ENCODE measurements at regions of chr6 and their contacts with region 1.

Region 1: GRCh38 chr6:87701676-87702588 is at the start of gene AKIRIN2:
- DNase-seq: peak; percentile 98
- H3K4me3 ChIP-seq: peak within 1 kb of the TSS; percentile 68 to 90 (median 85)
- H3K27ac ChIP-seq: peak within 1 kb of the TSS; percentile 94
- H3K4me1 ChIP-seq: peaks cover 15% of the 10 kb centered on the region
- H3K27me3 ChIP-seq: no peaks in the 10 kb centered on the region
- CTCF ChIP-seq: no peak
- total RNA-seq, gene AKIRIN2: 32.7 to 65.7 TPM

Region 2: DNA sequence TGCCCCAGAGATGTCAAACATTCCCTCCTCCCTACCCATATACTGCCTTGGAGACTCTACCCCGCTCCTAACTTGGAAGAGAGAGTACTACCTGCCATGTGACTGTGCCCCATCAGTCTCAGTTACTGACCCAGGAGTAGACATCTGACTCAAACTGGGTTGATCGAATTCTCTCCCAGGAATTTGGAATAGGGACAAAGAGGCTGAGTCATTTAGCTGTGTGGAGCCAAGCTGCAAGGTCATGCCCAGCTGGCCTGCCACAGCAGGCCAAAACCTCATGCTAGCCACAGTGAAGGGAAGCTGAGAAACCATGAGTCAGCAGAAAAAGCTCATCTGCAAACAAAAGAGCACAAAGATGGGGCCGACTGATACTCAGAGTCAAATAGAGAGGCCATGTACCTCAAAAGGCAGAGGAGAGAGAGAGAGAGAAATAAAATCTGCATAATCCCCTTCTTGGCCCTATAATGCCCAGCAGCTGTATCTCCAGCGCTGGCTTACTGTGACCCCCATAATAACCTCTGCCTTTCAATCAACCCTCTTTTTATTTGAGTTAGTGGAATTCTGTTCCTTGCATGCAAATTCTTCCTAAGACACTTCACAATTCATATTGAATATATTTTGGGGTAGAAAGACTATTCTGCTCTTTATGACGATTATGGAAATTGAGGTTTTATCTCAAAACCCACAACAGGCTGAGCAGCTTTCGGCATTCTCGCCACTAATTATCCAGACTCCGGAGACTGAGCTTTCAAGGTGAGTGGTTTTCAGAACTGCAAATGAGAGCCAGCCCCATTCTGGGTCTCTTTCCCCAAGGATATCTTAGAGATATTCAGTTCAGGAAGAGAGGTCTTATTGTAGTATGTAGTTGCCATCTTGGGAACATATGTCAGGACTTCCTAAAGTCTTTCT is 21.5 kb after region 1 on chr6:
- CTCF ChIA-PET with region 1: interaction called, 3 read pairs
- dilution Hi-C with region 1: no loop called
- in situ Hi-C with region 1: no loop called
- intact Hi-C with region 1: loop called (anchors 2 kb)
- DNase-seq: peak; percentile 98
- H3K4me3 ChIP-seq: no peak overlapping the region
- H3K27ac ChIP-seq: peak overlapping the region; percentile 88
- H3K4me1 ChIP-seq: peaks cover 33% of the 10 kb centered on the region
- H3K27me3 ChIP-seq: no peaks in the 10 kb centered on the region
- CTCF ChIP-seq: no peak

Region 3: DNA sequence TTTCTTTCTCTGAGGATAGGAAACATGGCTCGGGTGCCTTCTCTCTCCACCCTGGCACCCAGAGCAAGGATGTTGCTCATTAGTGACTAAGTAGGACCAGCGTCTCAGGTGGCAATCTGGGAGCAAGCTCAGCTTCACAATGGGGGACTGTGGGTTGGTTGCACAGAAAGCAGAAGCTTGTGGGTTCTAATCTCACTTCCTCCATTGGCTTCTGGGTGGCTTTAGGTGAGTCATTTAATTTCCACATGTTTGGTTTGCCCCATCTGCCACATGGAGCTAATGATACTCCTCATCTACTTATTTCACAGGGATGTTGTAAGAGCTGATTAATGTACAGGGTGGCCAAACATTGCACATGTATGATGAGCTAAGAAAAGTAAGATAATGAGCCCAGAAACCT is 54.9 kb after region 1 on chr6:
- CTCF ChIA-PET with region 1: no interaction called
- dilution Hi-C with region 1: loop called (anchors 5 kb)
- in situ Hi-C with region 1: no loop called
- intact Hi-C with region 1: loop called (anchors 1 kb)
- DNase-seq: peak; percentile 93
- H3K4me3 ChIP-seq: no peak overlapping the region
- H3K27ac ChIP-seq: peak overlapping the region; percentile 42
- H3K4me1 ChIP-seq: peaks cover 21% of the 10 kb centered on the region
- H3K27me3 ChIP-seq: no peaks in the 10 kb centered on the region
- CTCF ChIP-seq: no peak

Region 4: GRCh38 chr6:87789198-87789899 is 87.4 kb after region 1 on chr6:
- CTCF ChIA-PET with region 1: no interaction called
- dilution Hi-C with region 1: no loop called
- in situ Hi-C with region 1: no loop called
- intact Hi-C with region 1: loop called (anchors 1 kb)
- DNase-seq: peak; percentile 89
- H3K4me3 ChIP-seq: peak overlapping the region; percentile 18 to 28 (median 28)
- H3K27ac ChIP-seq: peak overlapping the region; percentile 98
- H3K4me1 ChIP-seq: peaks cover 18% of the 10 kb centered on the region
- H3K27me3 ChIP-seq: no peaks in the 10 kb centered on the region
- CTCF ChIP-seq: no peak

Region 5: GRCh38 chr6:87808005-87808757 is 106.2 kb after region 1 on chr6:
- CTCF ChIA-PET with region 1: no interaction called
- dilution Hi-C with region 1: no loop called
- in situ Hi-C with region 1: loop called in 1 of 2 experiments (anchors 10 kb)
- intact Hi-C with region 1: no loop called
- DNase-seq: peak; percentile 93
- H3K4me3 ChIP-seq: no peak overlapping the region
- H3K27ac ChIP-seq: no peak overlapping the region
- H3K4me1 ChIP-seq: peaks cover 17% of the 10 kb centered on the region
- H3K27me3 ChIP-seq: no peaks in the 10 kb centered on the region
- CTCF ChIP-seq: no peak

Measured in mammary epithelial cell (primary cell).